ENCODE measurements at regions of chr12 and their contacts with region 1.

Region 1: GRCh38 chr12:15563663-15564062 is 225.5 kb downstream of the EPS8 start:
- DNase-seq: peak in 1 of 2 donors; percentile 76
- H3K4me3 ChIP-seq: peak overlapping the region; percentile 22 to 49
- H3K27ac ChIP-seq: peak overlapping the region; percentile 51 to 71
- H3K4me1 ChIP-seq: peaks cover 2 to 30% of the 10 kb centered on the region in 2 donors
- H3K27me3 ChIP-seq: no peaks in the 10 kb centered on the region
- CTCF ChIP-seq: no peak

Region 2: GRCh38 chr12:14913381-14913781 is 650.3 kb before region 1 on chr12:
- intact Hi-C with region 1: no loop called
- DNase-seq: no peak
- H3K4me3 ChIP-seq: no peak overlapping the region
- H3K27ac ChIP-seq: no peak overlapping the region
- H3K4me1 ChIP-seq: no peaks in the 10 kb centered on the region
- H3K27me3 ChIP-seq: no peaks in the 10 kb centered on the region
- CTCF ChIP-seq: no peak

Region 3: GRCh38 chr12:15546102-15546701 is 17.5 kb before region 1 on chr12:
- intact Hi-C with region 1: loop called (anchors 2 kb)
- DNase-seq: no peak
- H3K4me3 ChIP-seq: peak overlapping the region; percentile 9 to 51
- H3K27ac ChIP-seq: peak overlapping the region; percentile 82 to 87
- H3K4me1 ChIP-seq: peaks cover 11 to 41% of the 10 kb centered on the region in 2 donors
- H3K27me3 ChIP-seq: no peaks in the 10 kb centered on the region
- CTCF ChIP-seq: no peak

Measured in ascending aorta (tissue), 2 donors.